ENCODE measurements at regions of chr6 and their contacts with region 1.

Region 1: DNA sequence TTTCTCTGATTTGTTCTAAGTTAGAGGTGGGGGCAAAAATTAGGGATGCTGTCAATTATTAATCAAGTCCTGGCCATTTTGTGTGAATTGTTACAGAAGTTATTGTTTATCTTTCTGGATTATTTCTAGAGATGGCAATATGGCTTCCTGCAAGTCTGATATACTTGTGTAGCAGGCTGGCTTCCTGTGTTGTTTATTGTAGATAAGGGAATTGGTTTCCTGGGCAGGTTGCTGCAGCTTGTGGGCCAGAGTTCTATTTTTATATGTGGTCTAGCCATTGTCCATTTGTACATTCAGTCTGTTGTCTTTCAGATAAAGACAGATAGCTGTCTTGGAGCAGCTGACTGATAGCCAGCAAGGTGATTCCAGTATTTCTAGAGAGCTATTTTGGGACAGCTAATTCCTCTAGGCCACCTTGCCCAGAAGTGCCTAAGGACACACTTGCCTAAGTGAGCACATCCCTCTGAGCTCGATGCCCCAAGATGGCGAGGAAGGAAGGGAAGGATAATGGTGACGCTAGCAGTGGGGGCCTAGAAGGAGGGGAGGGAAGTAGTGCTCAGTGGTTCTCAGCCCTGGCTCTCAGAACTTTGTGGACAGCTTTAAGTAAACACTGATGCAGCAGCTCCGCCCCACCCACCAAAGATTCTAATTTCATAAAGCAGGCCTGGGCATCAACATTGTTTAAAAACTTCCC is 25.5 kb downstream of the DDO start:
- H3K4me3 Mint-ChIP-seq: no peak overlapping the region
- H3K27ac Mint-ChIP-seq: no peak overlapping the region
- H3K4me1 Mint-ChIP-seq: no peaks in the 10 kb centered on the region
- H3K27me3 Mint-ChIP-seq: no peaks in the 10 kb centered on the region

Region 2: GRCh38 chr6:109526905-109527628 is 862.8 kb before region 1 on chr6:
- intact Hi-C with region 1: loop called (anchors 5 kb)
- H3K4me3 Mint-ChIP-seq: no peak overlapping the region
- H3K27ac Mint-ChIP-seq: no peak overlapping the region
- H3K4me1 Mint-ChIP-seq: no peaks in the 10 kb centered on the region
- H3K27me3 Mint-ChIP-seq: no peaks in the 10 kb centered on the region

Region 3: GRCh38 chr6:110147870-110148269 is 242.0 kb before region 1 on chr6:
- intact Hi-C with region 1: no loop called
- H3K4me3 Mint-ChIP-seq: no peak overlapping the region
- H3K27ac Mint-ChIP-seq: no peak overlapping the region
- H3K4me1 Mint-ChIP-seq: peaks cover 4% of the 10 kb centered on the region
- H3K27me3 Mint-ChIP-seq: no peaks in the 10 kb centered on the region

Region 4: DNA sequence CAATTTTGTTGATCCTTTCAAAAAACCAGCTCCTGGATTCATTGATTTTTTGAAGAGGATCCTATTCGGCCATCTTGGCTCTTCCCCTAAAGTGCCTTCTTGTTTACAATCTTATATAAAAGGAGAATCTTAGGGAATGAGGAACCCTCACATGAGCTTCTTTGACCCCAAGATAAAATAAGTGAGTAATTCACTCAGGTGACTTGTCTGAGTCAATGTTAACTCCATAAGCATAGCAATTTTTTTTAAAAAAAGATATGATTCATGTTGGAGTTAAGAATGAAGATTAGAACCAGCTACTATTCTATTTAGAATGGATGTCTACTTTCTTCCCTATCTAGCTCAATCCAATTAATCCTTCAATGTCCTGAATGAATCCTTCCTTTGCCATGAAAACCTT is 231.4 kb before region 1 on chr6:
- intact Hi-C with region 1: no loop called
- H3K4me3 Mint-ChIP-seq: no peak overlapping the region
- H3K27ac Mint-ChIP-seq: no peak overlapping the region
- H3K4me1 Mint-ChIP-seq: no peaks in the 10 kb centered on the region
- H3K27me3 Mint-ChIP-seq: no peaks in the 10 kb centered on the region